ENCODE measurements at regions of chr11 and their contacts with region 1.

Region 1: GRCh38 chr11:129695575-129696308 is 119.9 kb upstream of the TMEM45B start:
- DNase-seq: peak; percentile 83
- H3K4me3 ChIP-seq: peak overlapping the region; percentile 37
- H3K27ac ChIP-seq: no peak overlapping the region
- H3K4me1 ChIP-seq: no peaks in the 10 kb centered on the region
- H3K27me3 ChIP-seq: no peaks in the 10 kb centered on the region
- CTCF ChIP-seq: peak; percentile 81

Region 2: GRCh38 chr11:129364143-129364654 is 331.5 kb before region 1 on chr11:
- intact Hi-C with region 1: loop called (anchors 5 kb)
- DNase-seq: peak; percentile 90
- H3K4me3 ChIP-seq: no peak overlapping the region
- H3K27ac ChIP-seq: no peak overlapping the region
- H3K4me1 ChIP-seq: no peaks in the 10 kb centered on the region
- H3K27me3 ChIP-seq: no peaks in the 10 kb centered on the region
- CTCF ChIP-seq: peak; percentile 96

Region 3: GRCh38 chr11:129750349-129751292 is 54.9 kb after region 1 on chr11:
- intact Hi-C with region 1: loop called (anchors 2 kb)
- DNase-seq: peak; percentile 74
- H3K4me3 ChIP-seq: peak overlapping the region; percentile 23
- H3K27ac ChIP-seq: no peak overlapping the region
- H3K4me1 ChIP-seq: no peaks in the 10 kb centered on the region
- H3K27me3 ChIP-seq: peaks cover 2% of the 10 kb centered on the region
- CTCF ChIP-seq: peak; percentile 99

Region 4: DNA sequence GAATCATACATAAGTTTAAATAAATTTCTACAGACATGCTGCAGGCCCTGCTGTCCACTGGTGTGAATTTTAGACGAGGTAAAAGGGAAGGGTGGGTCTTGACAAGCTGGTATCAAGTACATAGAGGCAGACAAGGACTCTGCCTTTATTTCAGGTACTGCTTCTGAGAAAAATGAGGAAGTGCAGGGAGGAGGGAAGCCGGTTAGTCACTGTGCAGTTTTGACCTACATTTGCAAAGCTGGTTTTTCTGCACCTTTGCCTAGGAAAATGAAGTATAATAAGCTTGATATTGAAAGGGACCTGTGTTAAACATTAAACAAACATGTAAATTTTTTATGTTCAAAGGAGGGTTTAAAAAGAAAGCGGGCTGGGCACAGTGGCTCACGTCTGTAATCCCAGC is 144.5 kb after region 1 on chr11:
- intact Hi-C with region 1: no loop called
- DNase-seq: peak; percentile 56
- H3K4me3 ChIP-seq: no peak overlapping the region
- H3K27ac ChIP-seq: peak overlapping the region; percentile 6
- H3K4me1 ChIP-seq: no peaks in the 10 kb centered on the region
- H3K27me3 ChIP-seq: no peaks in the 10 kb centered on the region
- CTCF ChIP-seq: no peak